ENCODE measurements at regions of chr11 and their contacts with region 1.

Region 1: DNA sequence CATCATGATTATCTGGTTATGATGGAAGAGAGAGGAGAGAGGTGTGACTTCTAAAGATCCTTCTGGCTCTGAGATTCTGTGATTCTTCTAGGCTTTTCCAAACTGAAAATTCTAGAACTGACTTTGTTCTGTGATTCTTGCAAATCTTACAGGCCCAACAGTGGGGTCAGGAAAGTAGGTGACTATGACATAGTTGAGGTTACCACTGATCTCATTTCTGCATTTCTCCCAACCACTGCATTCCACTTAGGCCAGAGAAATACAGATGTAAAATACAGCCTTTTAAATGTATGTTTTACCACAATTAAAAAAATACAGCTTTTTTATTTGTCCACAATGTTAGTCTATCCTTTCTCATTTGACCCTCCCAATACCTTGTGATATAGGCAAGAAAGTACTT is 83.7 kb downstream of the STIM1 start:
- DNase-seq: peak in 1 of 3 donors; percentile 24
- H3K4me3 ChIP-seq: no peak overlapping the region
- H3K27ac ChIP-seq: no peak overlapping the region
- H3K4me1 ChIP-seq: peaks cover 13 to 34% (median 27%) of the 10 kb centered on the region in 4 experiments
- H3K27me3 ChIP-seq: no peaks in the 10 kb centered on the region

Region 2: DNA sequence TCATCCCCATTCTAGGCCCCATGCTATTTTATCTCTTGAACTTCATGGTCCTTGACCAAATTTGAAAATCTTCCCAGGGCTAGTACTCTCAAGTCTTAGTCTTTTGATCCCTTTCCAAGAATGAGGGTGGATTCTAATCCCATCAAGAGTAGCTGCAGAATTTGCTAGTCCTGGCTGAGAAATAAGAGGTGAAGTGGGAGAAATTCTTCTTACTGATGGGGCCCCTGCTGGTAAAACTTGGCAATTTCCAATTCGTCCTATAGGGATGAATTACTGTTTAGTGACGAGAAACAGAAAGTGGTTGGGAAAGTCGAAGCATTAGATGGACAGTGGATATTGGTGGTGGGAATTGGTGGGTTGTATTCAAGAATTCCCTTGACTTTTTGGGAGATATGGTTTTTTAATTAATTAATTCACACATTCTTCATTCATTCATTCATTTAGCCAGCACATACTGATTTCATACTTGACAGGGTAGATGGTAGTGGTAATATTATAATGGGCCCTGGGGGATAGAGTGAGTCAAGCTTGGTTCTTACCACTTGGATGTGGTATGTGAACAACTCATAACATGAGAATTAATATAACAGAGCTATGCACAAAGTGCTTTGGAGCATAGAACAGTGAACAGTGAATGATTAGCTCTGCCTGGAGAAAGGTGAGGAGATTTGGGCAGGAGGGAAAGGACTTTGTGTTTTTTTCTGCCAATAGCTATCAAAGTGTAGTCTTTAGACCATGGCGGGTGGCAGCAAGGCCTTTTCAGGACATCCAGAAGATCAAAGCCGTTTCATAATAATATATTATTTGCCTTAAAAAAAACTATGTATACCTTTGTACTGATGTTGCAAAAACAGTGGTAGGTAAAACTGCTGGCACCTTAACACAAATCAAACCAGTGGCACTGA is 20.1 kb after region 1 on chr11:
- CTCF ChIA-PET with region 1: interaction called, 18 read pairs
- POLR2A ChIA-PET with region 1: no interaction called
- DNase-seq: peak in 1 of 3 donors; percentile 43
- H3K4me3 ChIP-seq: no peak overlapping the region
- H3K27ac ChIP-seq: no peak overlapping the region
- H3K4me1 ChIP-seq: peaks cover 0 to 18% (median 5%) of the 10 kb centered on the region in 4 experiments
- H3K27me3 ChIP-seq: no peaks in the 10 kb centered on the region

Region 3: GRCh38 chr11:4087551-4087950 is 148.3 kb after region 1 on chr11:
- CTCF ChIA-PET with region 1: no interaction called
- POLR2A ChIA-PET with region 1: no interaction called
- DNase-seq: no peak
- H3K4me3 ChIP-seq: no peak overlapping the region
- H3K27ac ChIP-seq: no peak overlapping the region
- H3K4me1 ChIP-seq: peaks cover 0 to 29% (median 10%) of the 10 kb centered on the region in 4 experiments
- H3K27me3 ChIP-seq: no peaks in the 10 kb centered on the region

Measured in common myeloid progenitor, CD34-positive (primary cell).